Naive thymus-derived CD4-positive, alpha-beta T cell (primary cell): ENCODE measurements at regions of chr15 and their contacts with region 1.

Region 1: GRCh38 chr15:43749690-43750345 is 3.6 kb downstream of the PDIA3 start:
- DNase-seq: peak in 8 of 9 donors; percentile 38 to 84 (median 77)
- ATAC-seq: peak; percentile 59
- H3K4me3 ChIP-seq: peak overlapping the region; percentile 53
- H3K4me3 Mint-ChIP-seq: peak overlapping the region; percentile 75 to 97 (median 82)
- H3K27ac ChIP-seq: peak overlapping the region; percentile 75
- H3K27ac Mint-ChIP-seq: peak overlapping the region; percentile 77 to 92 (median 90)
- H3K4me1 ChIP-seq: peaks cover 30 to 43% of the 10 kb centered on the region in 2 donors
- H3K4me1 Mint-ChIP-seq: peaks cover 37 to 66% (median 54%) of the 10 kb centered on the region in 7 donors
- H3K27me3 ChIP-seq: no peaks in the 10 kb centered on the region
- H3K27me3 Mint-ChIP-seq: no peaks in the 10 kb centered on the region

Region 2: GRCh38 chr15:43510200-43511011 is 239.4 kb before region 1 on chr15:
- CTCF ChIA-PET with region 1: no interaction called
- POLR2A ChIA-PET with region 1: no interaction called
- intact Hi-C with region 1: loop called (anchors 1 to 2 kb)
- DNase-seq: peak; percentile 91 to 96 (median 94)
- ATAC-seq: peak; percentile 97
- H3K4me3 ChIP-seq: peak overlapping the region; percentile 88
- H3K4me3 Mint-ChIP-seq: peak overlapping the region; percentile 89 to 100 (median 94)
- H3K27ac ChIP-seq: peak overlapping the region; percentile 76
- H3K27ac Mint-ChIP-seq: peak overlapping the region; percentile 92 to 99 (median 97)
- H3K4me1 ChIP-seq: peaks cover 14 to 17% of the 10 kb centered on the region in 2 donors
- H3K4me1 Mint-ChIP-seq: peaks cover 14 to 51% (median 28%) of the 10 kb centered on the region in 7 donors
- H3K27me3 ChIP-seq: no peaks in the 10 kb centered on the region
- H3K27me3 Mint-ChIP-seq: peaks cover 0 to 2% (median under 1%) of the 10 kb centered on the region in 5 donors

Region 3: GRCh38 chr15:43735416-43735815 is 14.4 kb before region 1 on chr15:
- CTCF ChIA-PET with region 1: no interaction called
- POLR2A ChIA-PET with region 1: no interaction called
- intact Hi-C with region 1: no loop called
- DNase-seq: no peak
- ATAC-seq: no peak
- H3K4me3 ChIP-seq: no peak overlapping the region
- H3K4me3 Mint-ChIP-seq: no peak overlapping the region
- H3K27ac ChIP-seq: no peak overlapping the region
- H3K27ac Mint-ChIP-seq: peak overlapping the region in 1 of 9 donors; percentile 14
- H3K4me1 ChIP-seq: no peaks in the 10 kb centered on the region
- H3K4me1 Mint-ChIP-seq: peaks cover 0 to 8% (median 0%) of the 10 kb centered on the region in 7 donors
- H3K27me3 ChIP-seq: no peaks in the 10 kb centered on the region
- H3K27me3 Mint-ChIP-seq: peaks cover 0 to 13% (median 4%) of the 10 kb centered on the region in 5 donors

Region 4: DNA sequence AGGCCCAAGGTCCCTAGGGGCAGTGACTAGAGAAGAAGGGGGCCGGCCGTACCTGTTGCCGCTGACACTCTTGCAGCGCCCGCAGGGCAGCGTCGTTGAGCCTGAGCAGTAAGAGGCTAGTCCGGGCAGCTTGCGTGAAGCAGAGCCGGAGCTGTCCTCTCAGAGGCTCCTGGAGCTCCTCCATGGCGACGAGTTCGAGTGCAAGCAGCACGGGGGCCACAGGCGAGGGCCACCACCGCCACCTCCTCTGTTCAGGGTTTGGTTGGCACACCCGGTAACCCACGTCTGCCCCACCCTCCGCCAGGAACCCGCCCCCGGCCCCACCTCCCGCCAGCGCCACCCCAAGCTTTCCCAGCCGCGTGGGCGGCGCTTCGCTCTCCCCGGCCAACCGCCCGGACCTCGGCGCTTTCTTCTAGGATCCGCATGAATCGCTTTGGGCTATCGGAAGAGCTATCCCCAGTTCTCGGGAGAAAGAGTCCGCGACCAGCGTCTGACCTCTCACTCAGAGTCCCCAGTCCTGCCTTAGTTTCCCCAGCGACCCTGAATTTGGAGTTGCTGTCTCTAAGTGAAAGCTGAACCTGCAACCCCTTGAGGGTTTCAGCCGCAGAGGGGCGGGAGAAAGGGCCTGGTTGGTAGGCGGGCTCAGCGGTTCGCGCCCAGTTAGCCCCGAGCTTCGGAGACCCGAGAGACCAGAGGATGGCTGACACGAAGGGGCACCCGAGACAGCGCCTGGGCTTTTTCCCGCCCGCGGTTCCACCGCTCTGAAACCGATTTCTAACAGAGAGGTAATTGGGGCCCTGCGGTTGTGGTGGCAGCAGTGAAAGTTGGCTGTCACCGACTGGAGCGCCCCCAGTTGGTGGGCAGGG is 27.1 kb after region 1 on chr15 and contains the start of gene ELL3:
- CTCF ChIA-PET with region 1: interaction called, 3 read pairs
- POLR2A ChIA-PET with region 1: interaction called, 11 read pairs
- intact Hi-C with region 1: loop called (anchors 1 to 2 kb)
- DNase-seq: peak; percentile 69 to 87 (median 86)
- ATAC-seq: peak; percentile 87
- H3K4me3 ChIP-seq: peak within 1 kb of the TSS; percentile 100
- H3K4me3 Mint-ChIP-seq: peak within 1 kb of the TSS; percentile 89 to 97 (median 94)
- H3K27ac ChIP-seq: peak within 1 kb of the TSS; percentile 77
- H3K27ac Mint-ChIP-seq: peak within 1 kb of the TSS; percentile 87 to 97 (median 95)
- H3K4me1 ChIP-seq: peaks cover 0 to 9% of the 10 kb centered on the region in 2 donors
- H3K4me1 Mint-ChIP-seq: peaks cover 5 to 23% (median 11%) of the 10 kb centered on the region in 7 donors
- H3K27me3 ChIP-seq: no peaks in the 10 kb centered on the region
- H3K27me3 Mint-ChIP-seq: peaks cover 0 to 13% (median 0%) of the 10 kb centered on the region in 5 donors
- total RNA-seq, gene ELL3: 1.8 to 2.1 (median 1.9) TPM

Region 5: GRCh38 chr15:43800286-43801141 is 50.7 kb after region 1 on chr15 and contains the start of gene HYPK:
- CTCF ChIA-PET with region 1: no interaction called
- POLR2A ChIA-PET with region 1: interaction called, 13 read pairs
- intact Hi-C with region 1: loop called (anchors 2 kb)
- DNase-seq: peak; percentile 77 to 95 (median 91)
- ATAC-seq: peak; percentile 99
- H3K4me3 ChIP-seq: peak within 1 kb of the TSS; percentile 98
- H3K4me3 Mint-ChIP-seq: peak within 1 kb of the TSS; percentile 89 to 100 (median 99)
- H3K27ac ChIP-seq: peak within 1 kb of the TSS; percentile 85
- H3K27ac Mint-ChIP-seq: peak within 1 kb of the TSS; percentile 94 to 100 (median 97)
- H3K4me1 ChIP-seq: peaks cover 14 to 15% of the 10 kb centered on the region in 2 donors
- H3K4me1 Mint-ChIP-seq: peaks cover 21 to 54% (median 49%) of the 10 kb centered on the region in 7 donors
- H3K27me3 ChIP-seq: no peaks in the 10 kb centered on the region
- H3K27me3 Mint-ChIP-seq: no peaks in the 10 kb centered on the region
- total RNA-seq, gene HYPK: 16.9 to 32.1 (median 27.0) TPM

Region 6: DNA sequence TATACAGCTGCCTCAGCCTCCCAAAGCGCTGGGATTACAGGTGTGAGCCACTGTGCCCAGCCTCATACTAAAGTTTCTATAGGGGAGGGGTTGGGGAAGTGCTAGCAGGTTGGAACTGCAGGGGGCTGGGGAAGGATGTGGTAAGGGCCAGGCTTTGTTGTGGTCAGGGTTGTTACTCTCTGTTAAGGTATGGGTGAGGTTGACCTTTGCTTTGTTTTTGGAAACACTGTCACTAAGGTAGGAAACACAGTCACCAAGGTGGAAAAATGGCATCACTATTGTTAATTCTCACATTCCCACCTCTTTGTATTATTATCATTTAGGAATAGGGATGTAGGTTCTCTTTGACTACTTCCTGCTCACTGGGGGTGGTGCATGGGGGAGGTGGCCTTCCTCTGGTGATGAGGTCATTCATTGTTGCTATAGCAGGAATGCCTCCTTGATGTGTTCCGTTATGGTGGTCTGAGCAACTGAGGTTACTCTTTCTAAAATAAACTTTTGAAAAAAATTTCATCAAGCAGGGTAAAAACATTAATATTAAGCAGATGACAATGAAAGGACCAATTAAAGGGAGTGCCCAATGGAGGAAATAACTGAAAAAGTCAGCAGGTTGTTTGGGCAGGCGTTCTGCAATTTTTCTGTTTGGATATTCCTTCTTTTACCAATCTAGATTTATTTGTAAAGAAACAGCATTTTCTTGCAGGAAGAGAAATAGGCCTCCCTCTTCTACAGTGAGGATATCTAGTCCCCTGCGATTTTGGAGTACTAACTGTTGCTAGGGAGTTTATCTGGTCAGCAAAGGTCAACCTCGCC is 227.5 kb after region 1 on chr15:
- CTCF ChIA-PET with region 1: no interaction called
- POLR2A ChIA-PET with region 1: no interaction called
- intact Hi-C with region 1: no loop called
- DNase-seq: peak in 1 of 9 donors; percentile 69
- ATAC-seq: no peak
- H3K4me3 ChIP-seq: no peak overlapping the region
- H3K4me3 Mint-ChIP-seq: peak overlapping the region in 2 of 10 donors; percentile 12 to 29
- H3K27ac ChIP-seq: no peak overlapping the region
- H3K27ac Mint-ChIP-seq: peak overlapping the region in 1 of 9 donors; percentile 71
- H3K4me1 ChIP-seq: no peaks in the 10 kb centered on the region
- H3K4me1 Mint-ChIP-seq: peaks cover 0 to 31% (median 8%) of the 10 kb centered on the region in 7 donors
- H3K27me3 ChIP-seq: no peaks in the 10 kb centered on the region
- H3K27me3 Mint-ChIP-seq: peaks cover 9 to 29% (median 15%) of the 10 kb centered on the region in 5 donors

Region 7: DNA sequence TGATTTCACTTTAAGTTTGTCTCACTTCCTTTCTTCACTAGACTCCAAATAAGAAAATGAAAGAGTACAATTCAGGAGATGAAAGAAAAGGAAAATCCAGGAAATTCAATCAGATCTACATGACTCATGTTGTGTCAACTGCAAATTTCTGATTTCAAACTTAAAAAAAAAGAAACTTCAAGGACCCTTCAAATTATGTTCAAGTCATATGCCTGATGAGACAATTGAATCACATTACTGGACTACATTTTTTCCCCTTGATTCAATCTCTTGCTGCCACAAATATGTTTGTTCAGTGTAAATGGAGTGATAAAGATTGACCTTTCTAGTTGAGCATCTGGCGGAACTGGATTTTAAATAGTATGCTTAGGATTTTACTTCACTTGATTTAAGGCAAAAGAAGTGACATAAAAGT is 407.9 kb after region 1 on chr15:
- CTCF ChIA-PET with region 1: no interaction called
- POLR2A ChIA-PET with region 1: no interaction called
- intact Hi-C with region 1: no loop called
- DNase-seq: no peak
- ATAC-seq: no peak
- H3K4me3 ChIP-seq: no peak overlapping the region
- H3K4me3 Mint-ChIP-seq: no peak overlapping the region
- H3K27ac ChIP-seq: no peak overlapping the region
- H3K27ac Mint-ChIP-seq: no peak overlapping the region
- H3K4me1 ChIP-seq: no peaks in the 10 kb centered on the region
- H3K4me1 Mint-ChIP-seq: no peaks in the 10 kb centered on the region
- H3K27me3 ChIP-seq: no peaks in the 10 kb centered on the region
- H3K27me3 Mint-ChIP-seq: peaks cover 29 to 35% (median 31%) of the 10 kb centered on the region in 5 donors

Region 8: GRCh38 chr15:45022871-45023658 is 1273.2 kb after region 1 on chr15 and contains the start of gene SORD:
- CTCF ChIA-PET with region 1: no interaction called
- POLR2A ChIA-PET with region 1: no interaction called
- intact Hi-C with region 1: loop called in 1 of 2 experiments (anchors 5 kb)
- DNase-seq: peak; percentile 77 to 96 (median 83)
- ATAC-seq: peak; percentile 99
- H3K4me3 ChIP-seq: peak within 1 kb of the TSS; percentile 83
- H3K4me3 Mint-ChIP-seq: peak within 1 kb of the TSS; percentile 80 to 93 (median 88)
- H3K27ac ChIP-seq: peak within 1 kb of the TSS; percentile 42
- H3K27ac Mint-ChIP-seq: peak within 1 kb of the TSS; percentile 14 to 86 (median 60)
- H3K4me1 ChIP-seq: peaks cover 8 to 10% of the 10 kb centered on the region in 2 donors
- H3K4me1 Mint-ChIP-seq: peaks cover 12 to 32% (median 17%) of the 10 kb centered on the region in 7 donors
- H3K27me3 ChIP-seq: no peaks in the 10 kb centered on the region
- H3K27me3 Mint-ChIP-seq: peaks cover 12 to 28% (median 21%) of the 10 kb centered on the region in 5 donors
- total RNA-seq, gene SORD: 2.7 to 7.8 (median 6.4) TPM